Left ventricle myocardium superior (tissue), 1 donor: ENCODE measurements at regions of chrX and their contacts with region 1.

Region 1: GRCh38 chrX:24241822-24242648 is 71.8 kb downstream of the SUPT20HL2 start:
- DNase-seq: no peak
- ATAC-seq: peak; percentile 74

Region 2: GRCh38 chrX:24002167-24002566 is 239.9 kb before region 1 on chrX:
- intact Hi-C with region 1: no loop called
- DNase-seq: no peak
- ATAC-seq: no peak

Region 3: GRCh38 chrX:24054182-24055042 is 187.6 kb before region 1 on chrX and contains the start of gene EIF2S3:
- intact Hi-C with region 1: no loop called
- DNase-seq: peak; percentile 89
- ATAC-seq: peak; percentile 98
- total RNA-seq, gene EIF2S3: 76.8 TPM

Region 4: DNA sequence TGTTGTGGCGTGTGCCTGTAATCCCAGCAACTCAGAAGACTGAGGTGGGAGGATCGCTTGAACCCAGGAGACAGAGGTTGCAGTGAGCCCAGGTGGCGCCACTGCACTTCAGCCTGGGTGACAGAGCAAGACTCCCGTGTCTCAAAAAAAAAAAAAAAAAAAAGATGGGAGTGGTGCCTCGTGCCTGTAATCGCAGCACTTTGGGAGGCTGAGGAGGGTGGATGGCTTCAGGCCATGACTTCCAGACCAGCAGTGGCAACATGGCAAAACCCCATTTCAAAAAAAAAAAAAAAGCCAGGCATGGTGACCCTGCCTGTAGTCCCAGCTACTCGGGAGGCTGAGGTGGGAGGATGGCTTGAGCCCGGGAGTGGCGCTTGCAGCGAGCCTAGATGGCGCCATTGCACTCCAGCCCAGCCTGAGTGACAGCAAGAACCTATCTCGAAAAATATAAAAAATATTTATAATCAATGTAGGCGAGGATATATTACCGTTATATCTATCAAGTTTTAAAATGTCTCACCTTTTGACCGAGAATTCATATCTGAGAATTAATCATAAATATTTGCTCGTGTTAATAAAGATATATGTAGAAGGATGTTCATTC is 160.3 kb before region 1 on chrX:
- intact Hi-C with region 1: loop called (anchors 5 kb)
- DNase-seq: peak; percentile 57
- ATAC-seq: peak; percentile 74

Region 5: GRCh38 chrX:24153134-24153795 is 88.8 kb before region 1 on chrX:
- intact Hi-C with region 1: no loop called
- DNase-seq: no peak
- ATAC-seq: no peak

Region 6: GRCh38 chrX:24693453-24694202 is 451.6 kb after region 1 on chrX and contains the start of gene POLA1:
- intact Hi-C with region 1: no loop called
- DNase-seq: peak; percentile 94
- ATAC-seq: peak; percentile 100
- total RNA-seq, gene POLA1: 8.0 TPM